ENCODE measurements at regions of chr4 and their contacts with region 1.

Region 1: DNA sequence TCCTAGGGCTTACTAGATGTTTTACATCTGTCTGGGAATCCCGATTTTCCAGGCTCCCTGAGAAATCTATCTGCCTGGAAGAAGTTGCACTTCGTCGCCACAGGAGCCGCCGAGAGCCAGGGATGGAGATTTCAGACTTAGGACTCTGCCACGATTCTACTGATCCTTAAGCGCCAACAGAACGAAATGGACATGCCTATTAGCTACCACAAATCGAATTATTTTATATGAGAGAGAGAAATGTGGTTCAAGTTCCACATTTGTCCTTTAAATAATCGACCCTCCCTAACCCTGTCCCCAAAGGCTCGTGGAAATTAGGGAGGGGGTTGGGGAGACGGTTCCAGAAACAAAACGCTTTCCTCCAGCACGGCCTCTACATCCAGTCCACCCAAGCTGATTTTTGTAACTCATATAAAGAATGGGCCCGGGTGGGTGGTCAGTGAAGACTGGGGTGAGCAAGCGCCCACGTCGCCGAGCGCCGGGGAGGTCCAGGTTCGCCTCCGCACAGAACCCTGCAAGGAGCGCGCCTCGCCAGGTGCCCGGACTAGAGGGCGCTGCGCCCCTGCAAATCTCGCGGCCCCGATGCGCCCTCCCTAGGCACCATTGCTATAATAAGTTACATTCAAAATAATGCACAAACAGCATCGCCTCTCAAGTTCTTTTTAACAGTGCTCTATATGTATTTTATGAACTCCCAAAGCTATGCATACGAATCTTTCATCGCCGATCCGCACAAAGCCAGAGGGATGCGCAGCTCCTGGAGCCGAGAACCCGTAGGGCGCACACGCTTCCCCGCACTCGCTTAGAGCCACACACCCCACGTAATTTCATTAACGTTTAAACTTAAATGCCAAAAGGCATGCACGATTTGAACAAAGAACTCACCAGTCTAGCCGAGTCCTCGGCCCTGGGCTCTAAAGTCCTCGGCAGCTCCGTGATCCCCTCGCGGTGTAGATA is 2.1 kb upstream of the FAT1 start:
- DNase-seq: peak; percentile 83
- H3K4me3 Mint-ChIP-seq: peak overlapping the region; percentile 93
- H3K27ac Mint-ChIP-seq: peak overlapping the region; percentile 93
- H3K4me1 Mint-ChIP-seq: peaks cover 30% of the 10 kb centered on the region
- H3K27me3 Mint-ChIP-seq: no peaks in the 10 kb centered on the region
- CTCF ChIP-seq: peak; percentile 75

Region 2: GRCh38 chr4:186472948-186473347 is 252.8 kb before region 1 on chr4:
- CTCF ChIA-PET with region 1: no interaction called
- POLR2A ChIA-PET with region 1: no interaction called
- intact Hi-C with region 1: loop called (anchors 5 kb)
- DNase-seq: peak; percentile 56
- H3K4me3 Mint-ChIP-seq: no peak overlapping the region
- H3K27ac Mint-ChIP-seq: no peak overlapping the region
- H3K4me1 Mint-ChIP-seq: no peaks in the 10 kb centered on the region
- H3K27me3 Mint-ChIP-seq: no peaks in the 10 kb centered on the region
- CTCF ChIP-seq: peak; percentile 52

Region 3: GRCh38 chr4:186580669-186581068 is 145.1 kb before region 1 on chr4:
- CTCF ChIA-PET with region 1: no interaction called
- POLR2A ChIA-PET with region 1: no interaction called
- intact Hi-C with region 1: no loop called
- DNase-seq: no peak
- H3K4me3 Mint-ChIP-seq: no peak overlapping the region
- H3K27ac Mint-ChIP-seq: no peak overlapping the region
- H3K4me1 Mint-ChIP-seq: no peaks in the 10 kb centered on the region
- H3K27me3 Mint-ChIP-seq: no peaks in the 10 kb centered on the region
- CTCF ChIP-seq: no peak

Region 4: GRCh38 chr4:186765138-186765537 is 39.4 kb after region 1 on chr4:
- CTCF ChIA-PET with region 1: interaction called, 4 read pairs
- POLR2A ChIA-PET with region 1: interaction called, 18 read pairs
- intact Hi-C with region 1: loop called (anchors 2 kb)
- DNase-seq: peak; percentile 95
- H3K4me3 Mint-ChIP-seq: peak overlapping the region; percentile 60
- H3K27ac Mint-ChIP-seq: peak overlapping the region; percentile 88
- H3K4me1 Mint-ChIP-seq: peaks cover 27% of the 10 kb centered on the region
- H3K27me3 Mint-ChIP-seq: no peaks in the 10 kb centered on the region
- CTCF ChIP-seq: no peak

Region 5: GRCh38 chr4:186946682-186947294 is 221.0 kb after region 1 on chr4:
- CTCF ChIA-PET with region 1: no interaction called
- POLR2A ChIA-PET with region 1: no interaction called
- intact Hi-C with region 1: no loop called
- DNase-seq: peak; percentile 50
- H3K4me3 Mint-ChIP-seq: no peak overlapping the region
- H3K27ac Mint-ChIP-seq: no peak overlapping the region
- H3K4me1 Mint-ChIP-seq: no peaks in the 10 kb centered on the region
- H3K27me3 Mint-ChIP-seq: no peaks in the 10 kb centered on the region
- CTCF ChIP-seq: no peak

Region 6: DNA sequence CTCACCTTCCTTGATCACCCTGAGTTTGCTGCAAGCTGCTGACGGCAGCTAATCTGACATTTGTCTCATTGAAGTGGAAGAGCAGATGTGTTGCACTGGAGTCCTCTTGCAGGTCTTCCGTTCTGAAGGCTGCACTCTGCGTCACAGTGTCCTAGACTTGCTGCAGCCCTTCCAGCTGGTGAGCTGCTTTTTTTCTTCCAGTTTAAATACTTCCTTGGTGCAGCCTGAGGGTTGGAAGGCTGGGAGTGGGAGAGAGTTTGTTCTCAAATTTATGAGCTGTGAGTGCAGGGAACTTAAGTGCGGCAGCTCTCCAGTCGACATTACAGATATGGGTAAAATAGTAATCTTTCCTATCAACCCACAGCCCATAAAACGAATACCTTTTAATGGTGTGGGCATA is 301.5 kb after region 1 on chr4:
- CTCF ChIA-PET with region 1: no interaction called
- POLR2A ChIA-PET with region 1: no interaction called
- intact Hi-C with region 1: loop called (anchors 5 kb)
- DNase-seq: no peak
- H3K4me3 Mint-ChIP-seq: no peak overlapping the region
- H3K27ac Mint-ChIP-seq: no peak overlapping the region
- H3K4me1 Mint-ChIP-seq: no peaks in the 10 kb centered on the region
- H3K27me3 Mint-ChIP-seq: no peaks in the 10 kb centered on the region
- CTCF ChIP-seq: no peak

Region 7: GRCh38 chr4:187302457-187303150 is 576.9 kb after region 1 on chr4:
- CTCF ChIA-PET with region 1: no interaction called
- POLR2A ChIA-PET with region 1: no interaction called
- intact Hi-C with region 1: loop called (anchors 10 kb)
- DNase-seq: no peak
- H3K4me3 Mint-ChIP-seq: no peak overlapping the region
- H3K27ac Mint-ChIP-seq: peak overlapping the region; percentile 59
- H3K4me1 Mint-ChIP-seq: peaks cover 13% of the 10 kb centered on the region
- H3K27me3 Mint-ChIP-seq: no peaks in the 10 kb centered on the region
- CTCF ChIP-seq: no peak

Region 8: DNA sequence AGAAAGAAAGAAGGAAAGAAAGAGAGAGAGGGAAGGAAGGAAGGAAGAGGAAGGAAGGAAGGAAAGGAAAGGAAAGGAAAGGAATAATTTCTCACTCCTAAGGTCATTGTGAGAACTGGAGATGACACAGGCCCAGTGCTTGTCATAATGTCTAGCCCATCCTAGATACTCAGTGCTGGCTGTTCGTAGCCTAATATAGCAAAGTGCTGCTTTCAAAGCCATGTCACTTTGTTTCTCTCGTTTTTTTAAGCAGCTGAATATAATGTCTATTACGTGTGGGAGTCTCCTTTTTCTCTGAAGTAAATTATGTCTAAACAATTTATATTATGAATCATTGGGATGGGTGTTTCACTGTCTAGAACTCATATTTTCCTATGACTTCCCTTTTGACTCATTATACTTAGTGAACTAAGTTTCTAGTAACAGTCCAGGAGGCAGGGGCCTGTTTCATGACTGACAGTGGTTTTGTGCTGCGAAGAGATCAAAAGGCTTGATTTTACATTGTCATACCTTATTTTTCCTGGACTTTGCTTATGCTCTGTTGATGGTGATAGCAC is 942.9 kb after region 1 on chr4:
- CTCF ChIA-PET with region 1: no interaction called
- POLR2A ChIA-PET with region 1: no interaction called
- intact Hi-C with region 1: loop called (anchors 2 kb)
- DNase-seq: peak; percentile 27
- H3K4me3 Mint-ChIP-seq: no peak overlapping the region
- H3K27ac Mint-ChIP-seq: peak overlapping the region; percentile 9
- H3K4me1 Mint-ChIP-seq: peaks cover 7% of the 10 kb centered on the region
- H3K27me3 Mint-ChIP-seq: no peaks in the 10 kb centered on the region
- CTCF ChIP-seq: no peak

Region 9: GRCh38 chr4:188627892-188628291 is 1902.1 kb after region 1 on chr4:
- CTCF ChIA-PET with region 1: no interaction called
- POLR2A ChIA-PET with region 1: no interaction called
- intact Hi-C with region 1: loop called (anchors 5 kb)
- DNase-seq: no peak
- H3K4me3 Mint-ChIP-seq: no peak overlapping the region
- H3K27ac Mint-ChIP-seq: no peak overlapping the region
- H3K4me1 Mint-ChIP-seq: no peaks in the 10 kb centered on the region
- H3K27me3 Mint-ChIP-seq: no peaks in the 10 kb centered on the region
- CTCF ChIP-seq: no peak

Measured in MCF 10A (cell line).